ENCODE measurements at regions of chr14 and their contacts with region 1.

Region 1: DNA sequence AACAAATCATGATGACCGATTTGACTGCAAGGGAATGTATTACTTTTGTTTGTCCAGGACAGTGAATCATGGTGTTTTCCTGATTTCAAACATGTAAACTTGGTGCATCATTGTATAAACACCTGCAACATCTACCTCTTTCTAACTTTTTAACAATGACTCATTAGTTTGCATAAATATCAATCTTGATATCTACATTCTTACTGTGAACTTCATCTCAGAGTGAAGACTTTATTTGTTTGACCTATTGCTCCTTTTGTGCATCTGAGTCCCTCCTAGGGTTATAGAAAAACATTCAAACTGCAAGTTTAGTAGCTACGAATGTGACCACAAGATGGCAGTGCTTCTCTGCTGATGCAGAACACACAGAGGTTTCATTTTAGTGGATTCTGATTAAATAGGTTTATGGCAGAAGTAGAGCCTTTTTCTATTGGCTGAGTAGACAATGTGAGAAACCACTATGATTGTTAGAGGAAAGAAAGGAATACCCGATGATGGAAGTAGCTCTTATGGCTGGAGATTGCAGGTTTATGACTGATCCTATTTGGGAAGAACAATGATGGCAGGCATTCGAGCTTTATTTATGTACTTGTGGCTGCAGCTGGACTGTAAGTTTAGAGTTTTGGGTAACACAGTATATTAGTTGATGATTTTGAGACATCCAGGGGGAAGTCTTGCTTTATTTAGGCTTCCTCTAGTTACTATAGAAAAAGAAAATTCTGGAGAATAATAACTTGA is 244.2 kb upstream of the OR4E1 start:
- DNase-seq: peak; percentile 52
- H3K4me3 Mint-ChIP-seq: peak overlapping the region; percentile 75
- H3K27ac Mint-ChIP-seq: peak overlapping the region; percentile 64
- H3K4me1 Mint-ChIP-seq: peaks cover 55% of the 10 kb centered on the region
- H3K27me3 Mint-ChIP-seq: no peaks in the 10 kb centered on the region

Region 2: GRCh38 chr14:21626491-21627230 is 291.2 kb before region 1 on chr14:
- intact Hi-C with region 1: no loop called
- DNase-seq: no peak
- H3K4me3 Mint-ChIP-seq: no peak overlapping the region
- H3K27ac Mint-ChIP-seq: no peak overlapping the region
- H3K4me1 Mint-ChIP-seq: no peaks in the 10 kb centered on the region
- H3K27me3 Mint-ChIP-seq: peaks cover 6% of the 10 kb centered on the region

Region 3: GRCh38 chr14:21734457-21735074 is 183.3 kb before region 1 on chr14:
- intact Hi-C with region 1: no loop called
- DNase-seq: no peak
- H3K4me3 Mint-ChIP-seq: peak overlapping the region; percentile 23
- H3K27ac Mint-ChIP-seq: no peak overlapping the region
- H3K4me1 Mint-ChIP-seq: peaks cover 4% of the 10 kb centered on the region
- H3K27me3 Mint-ChIP-seq: peaks cover 28% of the 10 kb centered on the region

Region 4: DNA sequence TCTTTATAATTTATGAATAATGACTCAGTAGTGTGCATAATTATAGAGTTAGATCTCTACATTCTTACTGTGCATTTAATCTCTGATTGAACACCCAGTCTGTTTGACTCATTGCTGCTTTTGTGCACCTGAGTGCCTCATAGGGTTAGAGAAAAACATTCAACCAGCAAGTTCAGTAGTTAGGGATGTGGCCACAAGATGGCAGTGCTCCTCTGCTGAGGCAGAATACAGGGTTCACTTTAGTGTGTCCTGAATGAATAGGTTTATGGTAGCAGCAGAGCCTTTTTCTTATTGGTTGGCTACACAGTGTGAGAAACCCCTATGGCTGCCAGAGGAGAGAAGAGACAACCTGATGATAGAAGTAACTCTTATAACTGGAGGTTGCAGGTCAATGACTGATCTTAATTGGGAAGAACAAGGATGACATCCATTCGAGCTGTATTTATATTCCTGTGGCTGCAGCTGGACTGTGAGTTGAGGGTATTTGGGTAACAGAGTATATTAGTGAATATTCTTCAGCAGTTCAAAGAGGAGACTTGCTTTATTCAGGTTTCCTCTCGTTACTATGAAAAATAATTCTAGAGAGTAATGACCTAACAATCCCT is 49.3 kb before region 1 on chr14:
- intact Hi-C with region 1: loop called (anchors 5 kb)
- DNase-seq: peak; percentile 67
- H3K4me3 Mint-ChIP-seq: peak overlapping the region; percentile 65
- H3K27ac Mint-ChIP-seq: no peak overlapping the region
- H3K4me1 Mint-ChIP-seq: peaks cover 32% of the 10 kb centered on the region
- H3K27me3 Mint-ChIP-seq: peaks cover 2% of the 10 kb centered on the region

Region 5: GRCh38 chr14:21894003-21894897 is 23.6 kb before region 1 on chr14:
- intact Hi-C with region 1: loop called (anchors 2 kb)
- DNase-seq: peak; percentile 40
- H3K4me3 Mint-ChIP-seq: peak overlapping the region; percentile 79
- H3K27ac Mint-ChIP-seq: peak overlapping the region; percentile 88
- H3K4me1 Mint-ChIP-seq: peaks cover 19% of the 10 kb centered on the region
- H3K27me3 Mint-ChIP-seq: peaks cover 1% of the 10 kb centered on the region

Region 6: GRCh38 chr14:21978184-21978998 is 60.5 kb after region 1 on chr14:
- intact Hi-C with region 1: loop called (anchors 5 kb)
- DNase-seq: peak; percentile 58
- H3K4me3 Mint-ChIP-seq: peak overlapping the region; percentile 78
- H3K27ac Mint-ChIP-seq: peak overlapping the region; percentile 69
- H3K4me1 Mint-ChIP-seq: peaks cover 26% of the 10 kb centered on the region
- H3K27me3 Mint-ChIP-seq: peaks cover 11% of the 10 kb centered on the region

Region 7: GRCh38 chr14:22070119-22071011 is 152.5 kb after region 1 on chr14:
- intact Hi-C with region 1: loop called (anchors 10 kb)
- DNase-seq: peak; percentile 57
- H3K4me3 Mint-ChIP-seq: peak overlapping the region; percentile 91
- H3K27ac Mint-ChIP-seq: peak overlapping the region; percentile 92
- H3K4me1 Mint-ChIP-seq: peaks cover 43% of the 10 kb centered on the region
- H3K27me3 Mint-ChIP-seq: no peaks in the 10 kb centered on the region